Prostate gland (tissue), 2 donors: ENCODE measurements at regions of chr7 and their contacts with region 1.

Region 1: GRCh38 chr7:74449809-74450397 is 3.8 kb upstream of the GTF2IRD1 start:
- DNase-seq: peak; percentile 46
- H3K4me3 ChIP-seq: no peak overlapping the region
- H3K27ac ChIP-seq: no peak overlapping the region
- H3K4me1 ChIP-seq: no peaks in the 10 kb centered on the region
- H3K27me3 ChIP-seq: no peaks in the 10 kb centered on the region
- CTCF ChIP-seq: peak; percentile 77 to 82 (median 80)
- POLR2A ChIP-seq: no peak

Region 2: DNA sequence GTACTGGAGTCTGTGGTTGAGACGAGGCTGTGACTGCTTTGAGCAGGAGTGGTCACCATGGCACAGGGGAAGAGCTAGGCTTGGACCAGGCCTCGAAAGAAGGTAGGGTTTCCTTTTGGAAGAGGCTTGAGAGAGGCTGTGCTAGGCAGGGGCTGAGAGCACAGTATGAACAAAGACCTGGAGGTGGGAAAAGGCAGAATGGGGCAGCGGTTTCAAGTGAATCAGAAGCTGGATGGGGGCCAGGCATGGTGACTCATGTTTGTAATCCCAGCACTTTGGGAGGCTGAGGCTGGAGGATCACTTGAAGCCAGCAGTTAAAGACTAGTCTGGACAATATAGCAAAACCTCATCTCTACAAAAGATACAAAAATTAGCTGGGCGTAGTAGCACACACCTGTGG is 94.8 kb before region 1 on chr7:
- intact Hi-C with region 1: no loop called
- DNase-seq: no peak
- H3K4me3 ChIP-seq: no peak overlapping the region
- H3K27ac ChIP-seq: no peak overlapping the region
- H3K4me1 ChIP-seq: no peaks in the 10 kb centered on the region
- H3K27me3 ChIP-seq: no peaks in the 10 kb centered on the region
- CTCF ChIP-seq: no peak
- POLR2A ChIP-seq: no peak

Region 3: DNA sequence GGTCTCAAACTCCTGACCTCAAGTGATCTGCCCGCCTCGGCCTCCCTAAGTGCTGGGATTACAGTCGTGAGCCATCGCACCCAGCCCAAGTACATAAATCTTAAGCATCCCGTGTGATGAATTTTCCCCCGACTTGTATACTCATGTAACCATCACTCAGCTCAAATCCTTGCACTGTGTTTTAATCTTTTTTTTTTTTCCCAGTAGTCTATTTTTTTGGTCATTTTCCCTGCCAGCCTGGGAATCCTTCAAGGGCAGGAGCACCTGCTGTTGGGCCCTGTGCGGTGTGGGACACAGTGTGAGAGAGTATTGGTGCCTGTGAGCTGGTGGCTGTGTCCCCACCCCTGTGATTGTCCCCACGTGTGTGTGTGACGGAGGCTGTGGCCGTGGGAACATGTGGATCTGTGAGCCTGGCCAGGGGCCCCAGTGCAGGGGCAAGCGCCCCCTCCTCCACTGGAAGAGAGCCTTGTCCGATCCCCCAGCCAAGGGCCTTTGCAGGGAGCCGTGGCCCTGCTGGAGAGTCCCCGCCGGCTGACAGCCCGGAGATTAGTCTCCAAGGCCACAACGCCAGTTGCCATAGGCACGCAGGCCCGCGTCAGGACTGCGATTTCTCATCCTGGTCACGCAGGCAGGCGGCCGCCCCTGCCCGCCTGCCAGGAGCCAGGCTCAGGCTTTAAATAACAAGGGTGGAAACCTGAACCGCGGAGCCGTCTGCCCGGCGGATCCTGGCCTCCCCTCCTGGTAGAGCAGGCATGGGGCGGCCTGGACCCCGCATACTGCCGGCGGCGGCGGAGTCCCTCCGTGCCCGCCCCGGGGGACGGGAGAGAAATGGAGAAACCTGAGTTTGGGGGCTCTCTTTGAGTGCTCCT is 30.3 kb after region 1 on chr7:
- intact Hi-C with region 1: loop called (anchors 1 kb)
- DNase-seq: peak; percentile 79
- H3K4me3 ChIP-seq: peak overlapping the region; percentile 7
- H3K27ac ChIP-seq: peak overlapping the region; percentile 86 to 90
- H3K4me1 ChIP-seq: peaks cover 45% of the 10 kb centered on the region
- H3K27me3 ChIP-seq: no peaks in the 10 kb centered on the region
- CTCF ChIP-seq: peak in 2 of 4 experiments; percentile 4 to 11
- POLR2A ChIP-seq: peak; percentile 55

Region 4: GRCh38 chr7:74569501-74570075 is 119.7 kb after region 1 on chr7:
- intact Hi-C with region 1: loop called (anchors 10 kb)
- DNase-seq: no peak
- H3K4me3 ChIP-seq: no peak overlapping the region
- H3K27ac ChIP-seq: no peak overlapping the region
- H3K4me1 ChIP-seq: no peaks in the 10 kb centered on the region
- H3K27me3 ChIP-seq: no peaks in the 10 kb centered on the region
- CTCF ChIP-seq: no peak
- POLR2A ChIP-seq: no peak